Calu3 (cell line): ENCODE measurements at regions of chr17 and their contacts with region 1.

Region 1: DNA sequence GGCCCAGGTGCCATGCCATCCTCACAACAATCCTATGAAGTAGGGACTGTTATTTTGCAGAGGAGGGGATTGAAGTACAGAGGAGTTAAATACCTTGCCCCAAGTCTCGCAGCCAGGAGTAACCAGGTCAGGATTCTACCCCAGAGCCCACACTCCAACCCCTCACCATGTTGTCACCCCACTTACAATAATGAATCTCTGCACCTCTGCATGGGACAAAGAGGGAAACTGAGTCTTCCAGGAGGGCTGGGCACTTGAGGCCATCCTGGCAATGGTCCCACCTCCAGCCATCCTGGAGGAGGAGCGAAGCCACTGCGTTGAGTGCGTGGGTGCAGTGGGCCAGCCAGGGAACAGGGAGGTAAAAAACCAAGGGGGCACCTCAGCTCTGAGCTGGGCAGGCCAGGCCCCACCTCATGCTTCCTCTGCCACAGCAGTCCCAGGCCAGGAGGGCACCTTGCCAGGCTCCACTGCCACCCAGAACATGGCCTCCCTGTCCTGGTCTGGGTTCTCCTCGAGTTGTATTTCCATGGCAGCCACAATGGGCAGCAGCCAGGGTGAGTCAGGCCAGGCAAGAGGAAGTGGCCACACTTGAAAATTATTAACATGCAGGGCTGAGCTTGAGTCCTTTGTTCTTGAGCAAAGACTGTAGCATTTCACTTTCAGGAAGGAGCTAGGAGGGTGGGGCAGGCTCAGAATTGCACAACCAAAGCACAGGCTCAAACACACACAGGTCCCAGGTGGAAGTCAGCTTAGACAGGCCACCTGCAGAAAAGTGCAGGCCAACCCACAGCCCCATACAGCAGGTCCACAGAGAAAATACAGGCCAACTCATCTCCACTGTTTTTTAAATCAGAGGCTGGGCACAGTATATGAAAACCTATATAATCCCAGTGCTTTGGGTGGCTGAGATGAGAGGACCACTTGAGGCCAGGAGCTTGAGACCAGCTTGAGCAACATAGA is 52.1 kb downstream of the CUEDC1 start:
- DNase-seq: peak; percentile 84
- H3K4me3 Mint-ChIP-seq: peak overlapping the region; percentile 13
- H3K27ac Mint-ChIP-seq: peak overlapping the region; percentile 93
- H3K4me1 Mint-ChIP-seq: peaks cover 62% of the 10 kb centered on the region
- H3K27me3 Mint-ChIP-seq: no peaks in the 10 kb centered on the region
- CTCF ChIP-seq: no peak

Region 2: DNA sequence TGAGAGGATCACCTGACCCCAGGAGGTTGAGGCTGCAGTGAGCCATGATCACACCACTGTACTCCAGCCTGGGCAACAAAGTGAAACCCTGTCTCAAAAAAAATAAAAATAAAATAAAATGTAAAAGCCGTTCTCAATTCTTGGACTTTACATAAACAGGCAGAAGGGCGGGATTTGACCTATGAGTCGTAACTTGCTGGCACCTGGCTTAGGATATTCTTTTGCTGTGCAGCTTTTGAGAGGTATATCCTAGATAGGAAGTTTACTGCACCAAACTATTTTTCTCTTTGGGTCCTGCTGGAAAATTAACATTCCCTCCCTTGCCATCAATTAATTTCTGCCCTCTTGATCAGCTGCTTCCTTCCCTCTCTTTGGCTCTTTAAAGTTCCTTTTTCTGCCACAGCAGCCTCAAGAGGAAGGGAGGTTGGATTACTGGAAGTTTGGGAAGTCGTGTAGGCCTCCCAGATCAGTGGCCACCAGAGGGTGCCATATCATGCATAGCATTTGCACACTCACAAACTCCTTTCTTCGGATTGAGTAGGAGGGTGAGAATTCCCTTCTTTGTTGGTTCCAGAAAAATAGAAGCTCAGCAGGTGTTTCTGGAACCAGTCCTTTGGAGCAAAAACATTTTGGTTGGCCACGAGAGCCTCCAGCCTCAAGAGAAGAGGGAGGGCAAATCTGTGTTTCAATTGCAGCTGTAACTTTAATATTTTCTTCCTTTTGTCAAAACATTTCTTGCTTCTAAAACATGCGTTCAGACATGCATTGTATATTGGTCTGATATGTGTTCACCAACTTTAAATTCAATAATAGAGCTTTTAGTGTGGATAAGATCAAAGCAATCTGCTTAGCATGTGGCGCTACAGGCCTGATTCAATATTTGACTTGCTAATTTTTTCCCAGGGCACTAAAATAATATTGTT is 305.3 kb before region 1 on chr17:
- CTCF ChIA-PET with region 1: no interaction called
- intact Hi-C with region 1: no loop called
- DNase-seq: peak; percentile 52
- H3K4me3 Mint-ChIP-seq: no peak overlapping the region
- H3K27ac Mint-ChIP-seq: no peak overlapping the region
- H3K4me1 Mint-ChIP-seq: peaks cover 8% of the 10 kb centered on the region
- H3K27me3 Mint-ChIP-seq: no peaks in the 10 kb centered on the region
- CTCF ChIP-seq: peak; percentile 60

Region 3: DNA sequence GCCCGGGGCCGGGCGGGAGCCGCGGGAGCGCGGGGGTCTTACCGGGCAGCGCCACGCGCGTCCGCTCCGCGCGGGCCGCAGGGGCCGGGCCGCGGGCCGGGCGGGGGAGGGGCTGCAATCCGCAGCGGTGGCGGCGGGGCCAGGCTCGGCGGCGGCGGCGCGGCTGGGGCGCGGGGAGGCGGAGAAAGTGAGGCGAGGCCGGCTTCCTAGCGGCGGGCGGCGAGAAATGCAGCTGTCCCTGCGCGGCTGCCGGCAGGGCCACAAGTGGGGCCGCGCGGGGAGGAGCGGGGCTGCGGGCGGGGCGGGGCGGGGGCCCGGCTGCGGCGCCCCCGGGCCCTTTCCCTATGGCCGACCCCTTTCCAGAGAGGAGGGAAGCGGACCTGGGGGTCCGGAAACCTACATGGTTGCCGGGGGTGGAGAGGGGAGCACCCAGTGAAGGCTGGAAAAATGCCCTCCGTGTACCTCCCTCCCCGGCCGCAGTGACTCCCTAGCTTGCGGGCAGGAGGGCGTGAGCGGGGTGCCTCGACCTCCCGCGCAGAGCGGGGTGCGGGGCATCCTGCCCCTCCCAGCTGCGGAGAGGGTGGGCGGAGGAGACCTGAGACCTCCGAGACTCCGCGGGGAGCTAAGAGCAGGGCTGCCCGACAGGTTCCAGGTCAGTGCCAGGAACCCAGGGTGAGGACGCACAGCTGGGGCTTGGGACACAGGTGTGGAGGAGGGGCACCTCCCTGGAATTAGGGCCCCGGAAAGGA is 52.3 kb after region 1 on chr17 and contains the start of gene CUEDC1:
- CTCF ChIA-PET with region 1: interaction called, 3 read pairs
- intact Hi-C with region 1: loop called (anchors 2 kb)
- DNase-seq: peak; percentile 83
- H3K4me3 Mint-ChIP-seq: peak within 1 kb of the TSS; percentile 67
- H3K27ac Mint-ChIP-seq: peak within 1 kb of the TSS; percentile 70
- H3K4me1 Mint-ChIP-seq: peaks cover 12% of the 10 kb centered on the region
- H3K27me3 Mint-ChIP-seq: no peaks in the 10 kb centered on the region
- CTCF ChIP-seq: peak; percentile 21
- total RNA-seq, gene CUEDC1: 30.9 and 34.7 TPM in 2 replicates